ENCODE measurements at regions of chr1 and their contacts with region 1.

Region 1: DNA sequence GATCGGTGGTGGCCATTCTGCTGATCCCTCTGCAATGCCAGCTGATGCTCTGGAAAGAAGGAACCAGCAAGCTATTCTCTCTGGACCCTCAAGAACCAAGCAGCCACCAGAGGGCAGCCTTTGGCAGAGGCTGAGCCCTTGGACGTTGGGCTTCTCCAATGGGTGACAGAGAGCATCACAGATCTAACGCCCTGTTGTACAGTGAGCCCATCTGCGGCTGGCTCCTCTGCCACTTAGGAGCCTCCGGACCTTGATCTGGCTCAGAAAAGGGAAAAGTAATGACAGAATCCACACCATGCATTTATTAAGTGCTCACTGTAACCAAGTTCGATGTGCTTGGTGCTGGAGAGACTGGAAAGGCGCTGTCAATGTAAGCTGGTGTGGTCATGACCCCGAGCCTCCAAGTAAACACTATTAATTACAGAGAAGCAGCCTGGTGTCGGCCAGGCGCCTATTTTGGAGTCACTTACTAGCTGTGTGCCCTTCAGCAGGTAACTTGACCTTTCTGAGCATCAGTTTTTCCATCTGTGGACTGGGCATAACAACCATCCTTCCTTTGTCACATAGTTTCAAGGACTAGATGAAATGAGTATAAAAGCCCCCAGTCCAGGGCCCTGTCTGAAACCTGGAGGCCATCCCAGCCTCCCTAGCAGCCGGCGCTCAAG is 34.9 kb downstream of the ECE1 start:
- DNase-seq: peak; percentile 81
- ATAC-seq: peak; percentile 79
- H3K4me3 ChIP-seq: no peak overlapping the region
- H3K27ac ChIP-seq: no peak overlapping the region
- H3K4me1 ChIP-seq: peaks cover 26% of the 10 kb centered on the region
- H3K27me3 ChIP-seq: no peaks in the 10 kb centered on the region
- CTCF ChIP-seq: peak; percentile 95
- EP300 ChIP-seq: no peak
- POLR2A ChIP-seq: no peak
- RAD21 ChIP-seq: peak; percentile 95

Region 2: GRCh38 chr1:21232044-21232443 is 23.4 kb before region 1 on chr1:
- CTCF ChIA-PET with region 1: interaction called, 12 read pairs
- POLR2A ChIA-PET with region 1: interaction called, 4 read pairs
- in situ Hi-C with region 1: no loop called
- intact Hi-C with region 1: no loop called
- DNase-seq: peak; percentile 56
- ATAC-seq: peak; percentile 79
- H3K4me3 ChIP-seq: no peak overlapping the region
- H3K27ac ChIP-seq: no peak overlapping the region
- H3K4me1 ChIP-seq: peaks cover 6% of the 10 kb centered on the region; the same call in 1 of the 2 replicates
- H3K27me3 ChIP-seq: no peaks in the 10 kb centered on the region
- CTCF ChIP-seq: peak; percentile 87
- EP300 ChIP-seq: no peak
- POLR2A ChIP-seq: no peak
- RAD21 ChIP-seq: peak; percentile 84

Region 3: GRCh38 chr1:21270086-21270689 is 14.8 kb after region 1 on chr1:
- CTCF ChIA-PET with region 1: interaction called, 14 read pairs
- POLR2A ChIA-PET with region 1: interaction called, 22 read pairs
- in situ Hi-C with region 1: no loop called
- intact Hi-C with region 1: no loop called
- DNase-seq: peak; percentile 66
- ATAC-seq: peak; percentile 62
- H3K4me3 ChIP-seq: peak overlapping the region in 1 of 3 experiments; percentile 11; a peak in 1 of 6 replicates
- H3K27ac ChIP-seq: peak overlapping the region; percentile 70
- H3K4me1 ChIP-seq: peaks cover 84% of the 10 kb centered on the region
- H3K27me3 ChIP-seq: no peaks in the 10 kb centered on the region
- CTCF ChIP-seq: peak; percentile 85
- EP300 ChIP-seq: no peak
- POLR2A ChIP-seq: no peak
- RAD21 ChIP-seq: peak; percentile 71; the same call in 1 of the 2 replicates

Region 4: GRCh38 chr1:21324368-21325141 is 69.1 kb after region 1 on chr1:
- CTCF ChIA-PET with region 1: no interaction called
- POLR2A ChIA-PET with region 1: interaction called, 10 read pairs
- in situ Hi-C with region 1: no loop called
- intact Hi-C with region 1: no loop called
- DNase-seq: no peak
- ATAC-seq: peak; percentile 54
- H3K4me3 ChIP-seq: peak overlapping the region in 1 of 3 experiments; percentile 12; a peak in 1 of 6 replicates
- H3K27ac ChIP-seq: peak overlapping the region; percentile 37
- H3K4me1 ChIP-seq: peaks cover 100% of the 10 kb centered on the region
- H3K27me3 ChIP-seq: no peaks in the 10 kb centered on the region
- CTCF ChIP-seq: no peak
- EP300 ChIP-seq: no peak; a peak in 1 of 4 replicates
- POLR2A ChIP-seq: no peak
- RAD21 ChIP-seq: no peak

Region 5: GRCh38 chr1:21334214-21335087 is 79.0 kb after region 1 on chr1:
- CTCF ChIA-PET with region 1: interaction called, 7 read pairs
- POLR2A ChIA-PET with region 1: interaction called, 15 read pairs
- in situ Hi-C with region 1: no loop called
- intact Hi-C with region 1: no loop called
- DNase-seq: no peak
- ATAC-seq: peak; percentile 46
- H3K4me3 ChIP-seq: peak overlapping the region; percentile 62 to 78 (median 69)
- H3K27ac ChIP-seq: peak overlapping the region; percentile 25
- H3K4me1 ChIP-seq: peaks cover 94% of the 10 kb centered on the region
- H3K27me3 ChIP-seq: no peaks in the 10 kb centered on the region
- CTCF ChIP-seq: peak; percentile 87
- EP300 ChIP-seq: no peak
- POLR2A ChIP-seq: no peak
- RAD21 ChIP-seq: peak; percentile 61; the same call in 1 of the 2 replicates